Ascending aorta (tissue), 2 donors: ENCODE measurements at regions of chr12 and their contacts with region 1.

Region 1: DNA sequence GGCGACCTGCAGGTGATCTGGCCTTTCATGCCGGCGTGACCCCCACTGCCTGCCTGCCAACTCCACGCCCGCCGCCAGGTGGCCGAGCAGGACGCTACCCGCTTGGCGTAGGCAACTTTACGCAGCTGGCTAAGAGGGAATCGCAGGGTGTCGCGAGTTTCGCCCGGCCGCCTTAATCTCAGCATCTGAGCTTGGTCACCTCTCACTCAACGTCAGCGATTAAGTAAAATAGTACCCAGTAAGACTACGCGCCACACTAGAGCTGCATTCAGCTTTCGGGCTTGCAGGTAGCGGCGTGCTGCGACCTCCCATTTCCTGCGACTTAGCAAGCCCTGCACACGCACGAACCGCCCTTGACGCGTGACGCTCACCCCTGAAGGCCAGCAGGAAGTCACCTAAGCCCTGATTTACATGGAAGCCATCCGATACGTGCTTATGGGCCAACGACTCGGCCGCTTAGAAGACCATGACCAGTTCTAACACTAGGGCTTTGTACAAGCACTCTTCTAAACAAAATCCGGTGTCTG is 33.2 kb downstream of the WBP11 start:
- DNase-seq: peak; percentile 41 to 90
- H3K4me3 ChIP-seq: peak overlapping the region; percentile 75 to 81
- H3K27ac ChIP-seq: peak overlapping the region; percentile 88 to 98
- H3K4me1 ChIP-seq: peaks cover 0 to 7% of the 10 kb centered on the region in 2 donors
- H3K27me3 ChIP-seq: no peaks in the 10 kb centered on the region
- CTCF ChIP-seq: peak; percentile 78 to 93 (median 78)

Region 2: DNA sequence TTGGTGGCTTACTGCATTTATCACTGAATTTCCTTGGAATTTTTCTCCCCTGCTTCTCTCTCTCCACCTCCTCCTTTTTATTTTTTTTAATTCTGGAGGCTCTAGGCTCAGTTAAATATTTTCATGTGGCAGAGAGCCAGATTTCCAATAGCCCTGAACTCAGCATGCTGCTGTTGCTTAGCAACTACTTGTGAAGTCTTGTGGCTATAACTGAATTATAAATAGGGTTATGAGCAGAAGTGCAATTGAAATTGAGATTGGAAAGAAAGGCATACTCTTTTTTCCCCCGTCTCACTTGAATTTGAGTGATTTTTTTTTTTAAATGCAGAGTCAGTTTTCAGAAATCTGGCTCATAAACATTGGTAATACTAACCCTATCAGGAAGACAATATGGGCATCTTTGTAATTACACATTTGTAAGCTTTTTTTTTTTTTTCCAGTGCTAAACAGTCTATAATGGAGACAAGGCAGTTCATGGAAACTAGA is 366.3 kb before region 1 on chr12:
- intact Hi-C with region 1: loop called (anchors 10 kb)
- DNase-seq: peak in 1 of 2 donors; percentile 69
- H3K4me3 ChIP-seq: no peak overlapping the region
- H3K27ac ChIP-seq: peak overlapping the region; percentile 26 to 44
- H3K4me1 ChIP-seq: peaks cover 0 to 10% of the 10 kb centered on the region in 2 donors
- H3K27me3 ChIP-seq: no peaks in the 10 kb centered on the region
- CTCF ChIP-seq: no peak

Region 3: DNA sequence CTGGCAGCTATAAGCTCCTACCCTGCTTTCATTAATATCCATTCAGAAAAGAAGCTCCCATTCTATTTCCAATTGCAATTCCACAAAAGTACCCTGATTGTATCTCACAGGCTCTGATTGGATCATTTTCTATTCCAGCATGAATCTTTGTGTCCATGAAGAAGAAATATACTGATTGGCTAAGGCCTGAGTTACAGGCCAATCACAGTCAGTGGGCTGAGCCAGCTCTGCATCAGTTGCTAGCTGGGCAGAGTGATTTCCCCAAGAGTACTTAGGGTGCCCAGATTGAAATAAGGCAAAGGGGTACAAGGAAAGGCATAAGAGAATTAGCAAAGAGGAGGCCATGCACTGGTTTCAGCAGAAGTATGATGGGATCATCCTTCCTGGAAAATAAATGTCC is 58.9 kb after region 1 on chr12:
- intact Hi-C with region 1: no loop called
- DNase-seq: no peak
- H3K4me3 ChIP-seq: no peak overlapping the region
- H3K27ac ChIP-seq: no peak overlapping the region
- H3K4me1 ChIP-seq: no peaks in the 10 kb centered on the region
- H3K27me3 ChIP-seq: no peaks in the 10 kb centered on the region
- CTCF ChIP-seq: no peak

Region 4: DNA sequence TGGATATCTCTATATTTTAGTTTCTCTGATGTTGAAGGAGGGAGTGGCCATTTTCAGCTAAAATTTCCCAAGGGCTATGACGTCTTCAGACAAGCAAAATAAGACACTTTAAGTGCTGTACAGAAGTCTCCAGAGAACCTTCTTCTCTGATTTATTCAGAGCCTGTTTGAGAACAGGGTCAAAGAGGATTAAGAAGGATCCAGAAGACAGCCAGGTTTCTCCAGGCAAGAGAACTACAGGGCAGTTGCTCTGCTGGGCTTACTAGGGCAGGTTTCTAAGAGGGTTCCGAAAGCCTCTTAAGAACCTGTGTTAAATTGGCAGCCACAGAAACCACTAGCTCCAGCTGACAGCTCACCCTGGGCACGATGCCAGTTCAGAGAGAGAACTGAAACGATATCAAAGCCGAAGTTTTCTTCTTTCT is 114.4 kb after region 1 on chr12:
- intact Hi-C with region 1: loop called (anchors 2 kb)
- DNase-seq: peak; percentile 33 to 92
- H3K4me3 ChIP-seq: peak overlapping the region; percentile 61 to 75
- H3K27ac ChIP-seq: peak overlapping the region; percentile 86 to 87
- H3K4me1 ChIP-seq: peaks cover 0 to 5% of the 10 kb centered on the region in 2 donors
- H3K27me3 ChIP-seq: no peaks in the 10 kb centered on the region
- CTCF ChIP-seq: no peak

Region 5: GRCh38 chr12:14995583-14996425 is 225.8 kb after region 1 on chr12:
- intact Hi-C with region 1: loop called (anchors 10 kb)
- DNase-seq: no peak
- H3K4me3 ChIP-seq: no peak overlapping the region
- H3K27ac ChIP-seq: no peak overlapping the region
- H3K4me1 ChIP-seq: peaks cover 0 to 6% of the 10 kb centered on the region in 2 donors
- H3K27me3 ChIP-seq: no peaks in the 10 kb centered on the region
- CTCF ChIP-seq: peak; percentile 56 to 68 (median 58)